ENCODE measurements at regions of chr7 and their contacts with region 1.

Region 1: GRCh38 chr7:23273141-23273599 is 26.0 kb upstream of the MALSU1 start:
- DNase-seq: peak; percentile 77 to 97
- H3K4me3 ChIP-seq: peak overlapping the region in 2 of 4 experiments; percentile 2 to 31; a peak in 3 of 8 replicates
- H3K27ac ChIP-seq: no peak overlapping the region
- H3K4me1 ChIP-seq: peaks cover 0 to 3% (median 0%) of the 10 kb centered on the region in 4 experiments; a peak in 2 of 7 replicates
- H3K27me3 ChIP-seq: no peaks in the 10 kb centered on the region
- CTCF ChIP-seq: peak; percentile 89 to 97 (median 93)
- EP300 ChIP-seq: no peak
- POLR2A ChIP-seq: no peak
- RAD21 ChIP-seq: peak; percentile 87

Region 2: GRCh38 chr7:23181684-23182553 is 91.3 kb before region 1 on chr7 and contains the start of gene NUP42:
- CTCF ChIA-PET with region 1: no interaction called
- POLR2A ChIA-PET with region 1: no interaction called
- DNase-seq: peak; percentile 98 to 99
- H3K4me3 ChIP-seq: peak within 1 kb of the TSS; percentile 69 to 96 (median 84)
- H3K27ac ChIP-seq: peak within 1 kb of the TSS; percentile 88
- H3K4me1 ChIP-seq: peaks cover 0 to 3% (median under 1%) of the 10 kb centered on the region in 4 experiments; a peak in 2 of 7 replicates
- H3K27me3 ChIP-seq: no peaks in the 10 kb centered on the region
- CTCF ChIP-seq: no peak
- EP300 ChIP-seq: no peak
- POLR2A ChIP-seq: peak; percentile 72 to 91
- RAD21 ChIP-seq: no peak
- total RNA-seq, gene NUP42: 27.8 and 31.8 TPM in 2 replicates

Region 3: GRCh38 chr7:23234569-23235296 is 38.4 kb before region 1 on chr7:
- CTCF ChIA-PET with region 1: no interaction called
- POLR2A ChIA-PET with region 1: no interaction called
- DNase-seq: no peak
- H3K4me3 ChIP-seq: no peak overlapping the region
- H3K27ac ChIP-seq: no peak overlapping the region
- H3K4me1 ChIP-seq: no peaks in the 10 kb centered on the region
- H3K27me3 ChIP-seq: no peaks in the 10 kb centered on the region
- CTCF ChIP-seq: no peak
- EP300 ChIP-seq: no peak
- POLR2A ChIP-seq: no peak
- RAD21 ChIP-seq: no peak

Region 4: GRCh38 chr7:23261843-23262452 is 11.2 kb before region 1 on chr7:
- CTCF ChIA-PET with region 1: interaction called, 241 read pairs
- POLR2A ChIA-PET with region 1: interaction called, 7 read pairs
- DNase-seq: peak in 1 of 2 experiments; percentile 73
- H3K4me3 ChIP-seq: no peak overlapping the region
- H3K27ac ChIP-seq: no peak overlapping the region
- H3K4me1 ChIP-seq: no peaks in the 10 kb centered on the region
- H3K27me3 ChIP-seq: no peaks in the 10 kb centered on the region
- CTCF ChIP-seq: peak; percentile 86 to 97 (median 86)
- EP300 ChIP-seq: no peak
- POLR2A ChIP-seq: no peak
- RAD21 ChIP-seq: peak; percentile 80 to 91

Region 5: DNA sequence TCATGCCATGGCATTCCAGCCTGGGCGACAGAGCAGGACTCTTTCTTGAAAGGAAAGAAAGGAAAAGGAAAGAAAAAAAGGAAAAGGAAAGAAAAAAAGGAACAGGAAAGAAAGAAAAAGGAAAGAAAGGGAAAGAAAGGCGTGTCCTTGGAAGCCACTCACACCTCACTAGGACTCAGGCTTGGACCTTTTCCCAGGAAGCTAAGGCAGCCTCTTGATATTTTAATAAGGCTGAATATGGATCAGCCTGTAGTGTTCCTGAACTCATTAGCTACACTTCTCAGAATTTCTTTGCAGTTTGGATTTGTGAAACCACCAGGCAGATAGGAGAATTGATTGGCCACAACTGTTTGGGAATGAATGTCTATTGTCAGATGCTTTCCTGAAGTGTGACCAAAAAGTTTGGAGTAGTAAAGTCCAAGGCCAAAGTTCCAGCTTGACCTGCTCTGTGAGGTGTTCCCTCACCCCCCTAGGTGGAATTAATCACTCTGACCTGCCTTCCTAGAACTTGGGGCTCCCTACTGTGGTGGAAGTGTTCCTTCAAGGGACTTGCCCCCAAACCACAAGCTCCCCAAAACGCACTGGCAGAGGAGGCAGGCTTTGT is 18.9 kb after region 1 on chr7:
- CTCF ChIA-PET with region 1: interaction called, 27 read pairs
- POLR2A ChIA-PET with region 1: interaction called, 3 read pairs
- DNase-seq: no peak
- H3K4me3 ChIP-seq: no peak overlapping the region
- H3K27ac ChIP-seq: no peak overlapping the region
- H3K4me1 ChIP-seq: peaks cover 0 to 2% (median 0%) of the 10 kb centered on the region in 4 experiments; a peak in 1 of 7 replicates
- H3K27me3 ChIP-seq: no peaks in the 10 kb centered on the region
- CTCF ChIP-seq: no peak
- EP300 ChIP-seq: no peak
- POLR2A ChIP-seq: no peak
- RAD21 ChIP-seq: no peak

Region 6: GRCh38 chr7:23315366-23315765 is 42.2 kb after region 1 on chr7:
- CTCF ChIA-PET with region 1: interaction called, 12 read pairs
- POLR2A ChIA-PET with region 1: interaction called, 3 read pairs
- DNase-seq: no peak
- H3K4me3 ChIP-seq: no peak overlapping the region
- H3K27ac ChIP-seq: no peak overlapping the region
- H3K4me1 ChIP-seq: no peaks in the 10 kb centered on the region
- H3K27me3 ChIP-seq: no peaks in the 10 kb centered on the region
- CTCF ChIP-seq: no peak
- EP300 ChIP-seq: no peak
- POLR2A ChIP-seq: no peak
- RAD21 ChIP-seq: no peak

Measured in H1 (cell line).